K562 (cell line): ENCODE measurements at regions of chr10 and their contacts with region 1.

Region 1: DNA sequence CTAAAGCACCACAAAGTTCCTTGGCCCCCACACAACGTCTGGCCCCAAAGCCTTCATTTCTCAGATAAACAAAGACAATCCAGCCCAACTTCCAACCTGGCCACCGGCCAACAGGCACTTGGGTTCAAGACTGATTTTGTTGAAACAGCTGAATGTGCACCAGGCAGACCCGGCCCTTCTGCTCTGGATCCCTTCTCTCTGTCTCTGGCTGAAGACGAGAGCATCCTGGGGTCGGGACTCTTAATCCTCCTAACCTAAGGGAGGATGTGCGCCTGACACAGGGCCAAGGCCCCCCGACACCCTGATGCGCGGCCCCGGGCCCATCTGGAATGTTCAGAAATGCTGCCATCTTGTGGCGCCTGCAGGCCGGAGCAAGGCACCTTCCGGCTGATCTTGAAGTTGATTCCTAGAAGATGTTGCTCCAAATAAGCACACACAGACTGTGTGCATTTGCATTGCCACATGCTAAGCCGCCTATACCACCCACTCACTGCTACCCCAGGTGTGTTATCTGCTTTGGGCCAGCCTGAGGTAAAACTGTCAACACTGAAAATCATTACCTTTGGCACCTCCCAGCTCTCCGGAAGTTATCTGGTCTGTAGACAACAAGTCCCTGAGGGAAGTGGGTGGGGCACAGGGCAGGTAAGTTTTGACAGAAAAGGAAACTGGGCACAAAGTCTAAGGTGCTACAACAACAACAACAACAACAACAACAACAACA is 98.4 kb upstream of the HABP2 start:
- DNase-seq: peak; percentile 32 to 46 (median 38)
- ATAC-seq: peak; percentile 85
- H3K4me3 ChIP-seq: no peak overlapping the region
- H3K27ac ChIP-seq: no peak overlapping the region
- H3K4me1 ChIP-seq: no peaks in the 10 kb centered on the region
- H3K27me3 ChIP-seq: no peaks in the 10 kb centered on the region; a peak in 1 of 5 replicates
- CTCF ChIP-seq: peak; percentile 55 to 67 (median 55)
- EP300 ChIP-seq: no peak
- POLR2A ChIP-seq: no peak
- RAD21 ChIP-seq: peak in 1 of 2 experiments; percentile 56; a peak in 3 of 4 replicates

Region 2: GRCh38 chr10:113273181-113274163 is 181.0 kb before region 1 on chr10:
- CTCF ChIA-PET with region 1: no interaction called
- POLR2A ChIA-PET with region 1: no interaction called
- in situ Hi-C with region 1: no loop called
- intact Hi-C with region 1: no loop called
- DNase-seq: no peak
- ATAC-seq: no peak
- H3K4me3 ChIP-seq: no peak overlapping the region
- H3K27ac ChIP-seq: no peak overlapping the region
- H3K4me1 ChIP-seq: no peaks in the 10 kb centered on the region
- H3K27me3 ChIP-seq: peaks cover 4 to 20% of the 10 kb centered on the region in 2 experiments; a peak in 3 of 5 replicates
- CTCF ChIP-seq: no peak
- EP300 ChIP-seq: no peak
- POLR2A ChIP-seq: no peak
- RAD21 ChIP-seq: no peak

Region 3: GRCh38 chr10:113521123-113521795 is 66.8 kb after region 1 on chr10:
- CTCF ChIA-PET with region 1: no interaction called
- POLR2A ChIA-PET with region 1: no interaction called
- in situ Hi-C with region 1: no loop called
- intact Hi-C with region 1: loop called (anchors 5 kb)
- DNase-seq: peak; percentile 46 to 62 (median 56)
- ATAC-seq: peak; percentile 87
- H3K4me3 ChIP-seq: no peak overlapping the region
- H3K27ac ChIP-seq: no peak overlapping the region
- H3K4me1 ChIP-seq: no peaks in the 10 kb centered on the region
- H3K27me3 ChIP-seq: peaks cover 0 to 8% of the 10 kb centered on the region in 2 experiments; a peak in 2 of 5 replicates
- CTCF ChIP-seq: peak; percentile 84 to 89 (median 84)
- EP300 ChIP-seq: no peak
- POLR2A ChIP-seq: no peak
- RAD21 ChIP-seq: peak; percentile 56 to 69

Region 4: GRCh38 chr10:113539789-113540188 is 85.3 kb after region 1 on chr10:
- CTCF ChIA-PET with region 1: no interaction called
- POLR2A ChIA-PET with region 1: no interaction called
- in situ Hi-C with region 1: no loop called
- intact Hi-C with region 1: no loop called
- DNase-seq: no peak
- ATAC-seq: no peak
- H3K4me3 ChIP-seq: no peak overlapping the region
- H3K27ac ChIP-seq: no peak overlapping the region
- H3K4me1 ChIP-seq: no peaks in the 10 kb centered on the region
- H3K27me3 ChIP-seq: peaks cover 0 to 6% of the 10 kb centered on the region in 2 experiments; a peak in 2 of 5 replicates
- CTCF ChIP-seq: no peak
- EP300 ChIP-seq: no peak
- POLR2A ChIP-seq: no peak
- RAD21 ChIP-seq: no peak

Region 5: DNA sequence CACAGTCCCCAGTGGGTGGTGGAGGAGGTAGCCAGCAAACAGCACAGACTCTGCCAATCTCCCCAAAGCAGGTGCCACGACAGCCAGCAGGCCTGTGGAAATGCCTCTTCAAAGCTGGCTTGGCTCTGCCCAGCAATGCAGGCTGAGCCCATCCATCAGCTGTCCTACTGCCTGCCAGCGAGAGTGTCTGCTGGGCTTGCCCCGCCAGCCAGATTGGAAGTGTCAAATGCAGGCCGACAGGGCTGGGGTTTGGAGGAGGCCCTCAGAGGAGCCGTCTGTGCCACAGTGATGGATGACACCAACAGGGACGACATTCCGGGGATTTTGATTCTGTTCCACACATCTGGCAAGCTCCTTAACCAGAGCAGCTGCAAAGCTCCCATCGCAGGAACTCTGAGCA is 115.1 kb after region 1 on chr10:
- CTCF ChIA-PET with region 1: no interaction called
- POLR2A ChIA-PET with region 1: no interaction called
- in situ Hi-C with region 1: no loop called
- intact Hi-C with region 1: no loop called
- DNase-seq: no peak
- ATAC-seq: no peak
- H3K4me3 ChIP-seq: no peak overlapping the region
- H3K27ac ChIP-seq: no peak overlapping the region
- H3K4me1 ChIP-seq: no peaks in the 10 kb centered on the region
- H3K27me3 ChIP-seq: peaks cover 0 to 27% of the 10 kb centered on the region in 2 experiments; a peak in 2 of 5 replicates
- CTCF ChIP-seq: no peak
- EP300 ChIP-seq: no peak
- POLR2A ChIP-seq: no peak
- RAD21 ChIP-seq: no peak